ENCODE measurements at regions of chr3 and their contacts with region 1.

Region 1: GRCh38 chr3:181700168-181701087 is 11.3 kb upstream of the SOX2 start:
- DNase-seq: peak; percentile 44
- ATAC-seq: peak; percentile 86
- H3K4me3 ChIP-seq: no peak overlapping the region; a peak in 1 of 6 replicates
- H3K27ac ChIP-seq: no peak overlapping the region
- H3K4me1 ChIP-seq: no peaks in the 10 kb centered on the region
- H3K27me3 ChIP-seq: peaks cover 4 to 52% of the 10 kb centered on the region in 2 experiments
- CTCF ChIP-seq: peak; percentile 74
- EP300 ChIP-seq: no peak
- POLR2A ChIP-seq: no peak
- RAD21 ChIP-seq: 0 out of 2 replicates have a peak, but pooled peaks have one; percentile 19

Region 2: DNA sequence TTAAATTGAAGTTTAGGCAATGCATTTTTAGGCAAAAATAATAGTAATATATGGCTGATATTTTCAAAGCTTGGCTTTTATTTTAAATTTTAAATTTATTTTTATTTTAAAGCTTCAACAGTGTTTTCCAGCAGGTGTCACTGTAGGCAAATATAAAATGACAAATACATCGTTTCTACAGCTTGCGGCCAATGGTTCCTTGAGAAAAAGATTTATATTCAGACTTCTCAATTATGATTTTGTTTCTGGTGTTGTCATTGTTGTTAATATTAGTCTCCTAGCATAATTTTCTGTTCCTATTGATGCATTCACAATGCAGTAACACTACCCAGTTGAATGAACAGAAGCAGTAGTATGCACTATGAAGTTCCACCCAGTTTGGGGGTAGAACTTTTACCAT is 490.2 kb before region 1 on chr3:
- CTCF ChIA-PET with region 1: no interaction called
- POLR2A ChIA-PET with region 1: no interaction called
- in situ Hi-C with region 1: loop called (anchors 10 kb)
- intact Hi-C with region 1: loop called (anchors 2 kb)
- DNase-seq: peak; percentile 4
- ATAC-seq: no peak
- H3K4me3 ChIP-seq: no peak overlapping the region
- H3K27ac ChIP-seq: no peak overlapping the region
- H3K4me1 ChIP-seq: no peaks in the 10 kb centered on the region
- H3K27me3 ChIP-seq: no peaks in the 10 kb centered on the region
- CTCF ChIP-seq: no peak
- EP300 ChIP-seq: no peak
- POLR2A ChIP-seq: no peak
- RAD21 ChIP-seq: no peak

Region 3: GRCh38 chr3:181326637-181327223 is 373.7 kb before region 1 on chr3:
- CTCF ChIA-PET with region 1: no interaction called
- POLR2A ChIA-PET with region 1: no interaction called
- in situ Hi-C with region 1: no loop called
- intact Hi-C with region 1: loop called (anchors 1 kb)
- DNase-seq: peak; percentile 18
- ATAC-seq: peak; percentile 53; the same call in 2 of the 3 replicates
- H3K4me3 ChIP-seq: no peak overlapping the region
- H3K27ac ChIP-seq: no peak overlapping the region
- H3K4me1 ChIP-seq: no peaks in the 10 kb centered on the region
- H3K27me3 ChIP-seq: no peaks in the 10 kb centered on the region
- CTCF ChIP-seq: peak; percentile 59
- EP300 ChIP-seq: no peak
- POLR2A ChIP-seq: no peak
- RAD21 ChIP-seq: no peak

Region 4: DNA sequence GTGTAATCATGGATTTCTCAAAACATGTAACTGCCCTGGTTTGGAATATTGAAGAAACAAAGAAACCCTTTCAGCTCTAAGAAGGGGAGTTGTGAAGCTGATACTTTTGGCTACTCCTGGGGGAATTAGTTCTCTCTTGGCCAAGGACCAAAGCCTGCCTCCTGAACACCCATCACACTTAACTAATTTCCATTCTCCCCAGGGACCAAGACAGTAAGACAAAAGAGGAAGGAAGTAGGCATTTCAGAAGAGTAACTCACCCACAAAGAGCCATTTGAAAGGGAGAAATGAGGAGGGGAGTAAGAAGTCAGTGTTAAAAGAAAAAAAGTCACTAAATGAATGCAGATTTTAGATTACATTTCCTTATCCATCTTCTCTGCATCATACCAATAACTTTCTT is 316.7 kb before region 1 on chr3:
- CTCF ChIA-PET with region 1: no interaction called
- POLR2A ChIA-PET with region 1: no interaction called
- in situ Hi-C with region 1: no loop called
- intact Hi-C with region 1: no loop called
- DNase-seq: no peak
- ATAC-seq: no peak
- H3K4me3 ChIP-seq: no peak overlapping the region
- H3K27ac ChIP-seq: no peak overlapping the region
- H3K4me1 ChIP-seq: no peaks in the 10 kb centered on the region
- H3K27me3 ChIP-seq: no peaks in the 10 kb centered on the region
- CTCF ChIP-seq: no peak
- EP300 ChIP-seq: no peak
- POLR2A ChIP-seq: no peak
- RAD21 ChIP-seq: no peak

Region 5: GRCh38 chr3:181510500-181510899 is 189.9 kb before region 1 on chr3:
- CTCF ChIA-PET with region 1: no interaction called
- POLR2A ChIA-PET with region 1: no interaction called
- in situ Hi-C with region 1: no loop called
- intact Hi-C with region 1: no loop called
- DNase-seq: no peak
- ATAC-seq: no peak
- H3K4me3 ChIP-seq: no peak overlapping the region
- H3K27ac ChIP-seq: no peak overlapping the region
- H3K4me1 ChIP-seq: no peaks in the 10 kb centered on the region
- H3K27me3 ChIP-seq: no peaks in the 10 kb centered on the region
- CTCF ChIP-seq: no peak
- EP300 ChIP-seq: no peak
- POLR2A ChIP-seq: no peak
- RAD21 ChIP-seq: no peak

Region 6: GRCh38 chr3:181899702-181900101 is 199.3 kb after region 1 on chr3:
- CTCF ChIA-PET with region 1: no interaction called
- POLR2A ChIA-PET with region 1: no interaction called
- in situ Hi-C with region 1: no loop called
- intact Hi-C with region 1: loop called (anchors 10 kb)
- DNase-seq: no peak
- ATAC-seq: no peak
- H3K4me3 ChIP-seq: no peak overlapping the region
- H3K27ac ChIP-seq: no peak overlapping the region
- H3K4me1 ChIP-seq: no peaks in the 10 kb centered on the region
- H3K27me3 ChIP-seq: no peaks in the 10 kb centered on the region
- CTCF ChIP-seq: no peak
- EP300 ChIP-seq: no peak
- POLR2A ChIP-seq: no peak
- RAD21 ChIP-seq: no peak

Region 7: GRCh38 chr3:181941250-181941649 is 240.8 kb after region 1 on chr3:
- CTCF ChIA-PET with region 1: no interaction called
- POLR2A ChIA-PET with region 1: no interaction called
- in situ Hi-C with region 1: no loop called
- intact Hi-C with region 1: loop called (anchors 10 kb)
- DNase-seq: no peak
- ATAC-seq: no peak
- H3K4me3 ChIP-seq: no peak overlapping the region
- H3K27ac ChIP-seq: no peak overlapping the region
- H3K4me1 ChIP-seq: no peaks in the 10 kb centered on the region
- H3K27me3 ChIP-seq: no peaks in the 10 kb centered on the region
- CTCF ChIP-seq: no peak
- EP300 ChIP-seq: no peak
- POLR2A ChIP-seq: no peak
- RAD21 ChIP-seq: no peak

Region 8: GRCh38 chr3:182490596-182491491 is 790.4 kb after region 1 on chr3:
- CTCF ChIA-PET with region 1: interaction called, 3 read pairs
- POLR2A ChIA-PET with region 1: no interaction called
- in situ Hi-C with region 1: loop called (anchors 25 kb)
- intact Hi-C with region 1: no loop called
- DNase-seq: peak; percentile 7
- ATAC-seq: 0 out of 3 replicates have a peak, but pooled peaks have one; percentile 38
- H3K4me3 ChIP-seq: no peak overlapping the region
- H3K27ac ChIP-seq: no peak overlapping the region
- H3K4me1 ChIP-seq: no peaks in the 10 kb centered on the region
- H3K27me3 ChIP-seq: no peaks in the 10 kb centered on the region
- CTCF ChIP-seq: peak; percentile 41
- EP300 ChIP-seq: no peak
- POLR2A ChIP-seq: no peak
- RAD21 ChIP-seq: no peak